Heart left ventricle (tissue), 16 donors: ENCODE measurements at regions of chr7 and their contacts with region 1.

Region 1: GRCh38 chr7:134547397-134548054 is 1.4 kb upstream of the AKR1B15 start:
- DNase-seq: peak; percentile 64 to 81 (median 70)
- ATAC-seq: peak; percentile 90 to 96 (median 94)
- H3K4me3 ChIP-seq: peak overlapping the region in 10 of 12 donors; percentile 19 to 52 (median 42)
- H3K27ac ChIP-seq: peak overlapping the region in 3 of 12 donors; percentile 12 to 55 (median 46)
- H3K4me1 ChIP-seq: peaks cover 0 to 13% (median 0%) of the 10 kb centered on the region in 12 donors
- H3K27me3 ChIP-seq: peaks cover 0 to 2% (median 0%) of the 10 kb centered on the region in 9 donors
- CTCF ChIP-seq: peak; percentile 69 to 96 (median 84)
- POLR2A ChIP-seq: no peak

Region 2: GRCh38 chr7:134432296-134433152 is 115.0 kb before region 1 on chr7:
- intact Hi-C with region 1: loop called in 6 of 10 experiments (anchors 1 to 10 kb)
- DNase-seq: peak; percentile 82 to 93 (median 91)
- ATAC-seq: peak; percentile 92 to 98 (median 98)
- H3K4me3 ChIP-seq: peak overlapping the region in 11 of 12 donors; percentile 6 to 54 (median 41)
- H3K27ac ChIP-seq: peak overlapping the region in 11 of 12 donors; percentile 51 to 86 (median 77)
- H3K4me1 ChIP-seq: peaks cover 0 to 17% (median 4%) of the 10 kb centered on the region in 12 donors
- H3K27me3 ChIP-seq: peaks cover 0 to 3% (median 0%) of the 10 kb centered on the region in 9 donors
- CTCF ChIP-seq: peak; percentile 60 to 89 (median 82)
- POLR2A ChIP-seq: peak in 1 of 2 donors; percentile 20